Activated naive CD4-positive, alpha-beta T cell treated with anti-CD3 and anti-CD28 coated beads, Interleukin-2, amount 10 ng/mL, durations not matched to agents 7 days and 5 days (primary cell): ENCODE measurements at regions of chr1 and their contacts with region 1.

Region 1: GRCh38 chr1:101288491-101288944 is 51.7 kb downstream of the S1PR1 start:
- DNase-seq: peak; percentile 78
- H3K4me3 Mint-ChIP-seq: no peak overlapping the region
- H3K27ac Mint-ChIP-seq: peak overlapping the region; percentile 35
- H3K4me1 Mint-ChIP-seq: peaks cover 92% of the 10 kb centered on the region
- H3K27me3 Mint-ChIP-seq: no peaks in the 10 kb centered on the region

Region 2: DNA sequence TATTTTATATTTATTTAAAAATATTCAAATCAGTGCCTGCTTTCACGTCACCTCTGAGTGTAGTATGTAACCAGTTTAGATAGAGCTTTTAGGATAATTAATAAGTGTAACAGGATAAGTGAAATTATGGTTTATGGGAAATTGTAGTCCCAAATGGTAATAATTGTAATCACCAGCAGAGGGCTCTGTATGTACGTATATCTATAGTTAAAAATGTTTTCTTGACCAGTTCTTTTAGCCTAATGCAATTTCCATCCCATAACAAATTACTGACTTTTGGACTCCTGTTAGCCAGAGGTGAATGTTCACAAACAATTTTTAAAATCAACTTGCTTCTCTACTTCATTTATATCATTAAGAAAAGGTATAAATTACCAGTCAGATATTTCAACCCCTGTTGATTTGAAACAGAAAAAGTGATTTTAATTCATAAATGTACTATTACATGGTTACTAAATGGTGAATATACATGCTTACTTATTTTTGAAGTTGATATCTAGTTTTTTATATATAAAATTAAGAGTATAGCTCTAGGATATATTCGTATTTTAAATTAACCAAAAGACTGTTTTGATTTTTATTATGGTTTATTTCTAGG is 367.3 kb before region 1 on chr1:
- CTCF ChIA-PET with region 1: interaction called, 115 read pairs
- DNase-seq: no peak
- H3K4me3 Mint-ChIP-seq: no peak overlapping the region
- H3K27ac Mint-ChIP-seq: peak overlapping the region; percentile 75
- H3K4me1 Mint-ChIP-seq: peaks cover 22% of the 10 kb centered on the region
- H3K27me3 Mint-ChIP-seq: no peaks in the 10 kb centered on the region

Region 3: DNA sequence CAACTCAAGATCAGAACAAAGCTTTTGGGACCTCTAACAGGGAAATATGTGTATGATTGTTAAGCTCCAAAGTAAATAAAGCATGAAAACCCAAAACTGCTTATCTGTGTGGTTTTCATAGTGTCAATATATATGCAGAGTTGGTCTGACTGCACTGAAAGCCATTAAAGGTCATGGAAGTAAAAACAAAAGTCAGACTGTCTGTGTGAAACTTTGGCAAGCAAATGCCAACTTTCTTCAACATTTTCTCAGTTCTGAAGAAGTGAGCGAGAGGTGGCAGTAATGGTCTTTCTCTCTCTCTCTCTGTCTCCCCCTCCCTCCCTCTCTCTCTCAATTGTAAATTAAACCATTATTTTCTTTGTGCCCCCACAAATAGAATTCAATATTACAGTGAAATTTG is 151.8 kb before region 1 on chr1:
- CTCF ChIA-PET with region 1: interaction called, 113 read pairs
- DNase-seq: peak; percentile 54
- H3K4me3 Mint-ChIP-seq: peak overlapping the region; percentile 45
- H3K27ac Mint-ChIP-seq: peak overlapping the region; percentile 86
- H3K4me1 Mint-ChIP-seq: peaks cover 72% of the 10 kb centered on the region
- H3K27me3 Mint-ChIP-seq: no peaks in the 10 kb centered on the region

Region 4: GRCh38 chr1:101247404-101248287 is 40.9 kb before region 1 on chr1:
- CTCF ChIA-PET with region 1: interaction called, 23 read pairs
- DNase-seq: no peak
- H3K4me3 Mint-ChIP-seq: no peak overlapping the region
- H3K27ac Mint-ChIP-seq: no peak overlapping the region
- H3K4me1 Mint-ChIP-seq: peaks cover 39% of the 10 kb centered on the region
- H3K27me3 Mint-ChIP-seq: no peaks in the 10 kb centered on the region

Region 5: GRCh38 chr1:101309334-101310311 is 21.1 kb after region 1 on chr1:
- CTCF ChIA-PET with region 1: interaction called, 26 read pairs
- DNase-seq: peak; percentile 81
- H3K4me3 Mint-ChIP-seq: peak overlapping the region; percentile 76
- H3K27ac Mint-ChIP-seq: peak overlapping the region; percentile 99
- H3K4me1 Mint-ChIP-seq: peaks cover 74% of the 10 kb centered on the region
- H3K27me3 Mint-ChIP-seq: no peaks in the 10 kb centered on the region